Psoas muscle (tissue), 8 donors: ENCODE measurements at regions of chr5 and their contacts with region 1.

Region 1: DNA sequence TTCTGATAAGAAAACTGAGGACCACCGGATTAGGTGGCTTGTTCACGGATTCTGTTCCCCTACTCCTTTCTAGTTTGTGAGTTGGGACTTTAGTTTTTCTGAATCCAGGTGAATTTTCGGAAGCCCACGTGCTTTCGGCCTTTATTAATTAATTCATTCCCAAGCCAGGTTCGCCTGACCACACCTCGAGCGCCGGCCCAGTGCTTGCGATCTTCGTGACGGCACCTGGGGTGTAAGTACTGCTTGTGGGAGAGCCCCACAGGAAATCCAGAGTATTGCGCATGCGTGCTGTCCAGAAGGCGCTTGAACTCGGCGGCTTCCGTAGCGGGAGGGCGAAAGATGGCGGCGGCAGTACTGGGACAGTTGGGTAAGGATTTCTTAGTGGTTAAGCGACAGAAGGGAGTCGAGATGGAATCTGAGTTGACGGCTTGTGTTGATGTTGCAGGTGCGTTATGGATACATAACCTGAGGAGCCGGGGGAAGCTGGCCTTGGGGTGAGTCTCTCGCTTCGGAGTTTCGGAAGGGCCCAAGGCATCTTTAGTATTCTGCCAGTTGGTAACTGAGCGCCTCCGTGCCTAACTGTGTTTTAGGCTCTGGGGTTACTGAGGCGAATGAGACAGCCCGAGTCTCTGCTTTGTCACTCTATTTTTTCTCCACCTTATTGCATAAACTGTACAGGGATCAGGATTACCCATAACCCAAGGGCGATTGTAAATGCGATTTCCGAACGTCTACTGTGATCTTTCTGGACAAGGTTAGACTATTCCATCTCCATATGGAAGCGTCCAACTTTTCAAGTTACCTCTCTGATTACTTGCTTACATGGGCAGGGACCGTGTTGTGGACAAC is at the start of gene MRPL22:
- DNase-seq: peak; percentile 92 to 96
- ATAC-seq: peak; percentile 78 to 87 (median 82)
- H3K4me3 ChIP-seq: peak within 1 kb of the TSS; percentile 79
- H3K27ac ChIP-seq: peak within 1 kb of the TSS; percentile 87
- H3K4me1 ChIP-seq: peaks cover 34% of the 10 kb centered on the region
- H3K27me3 ChIP-seq: no peaks in the 10 kb centered on the region
- CTCF ChIP-seq: peak; percentile 11
- total RNA-seq, gene MRPL22: 28.4 to 53.0 (median 38.1) TPM

Region 2: GRCh38 chr5:154478224-154478565 is 462.8 kb before region 1 on chr5 and contains the start of gene HAND1:
- intact Hi-C with region 1: loop called in 1 of 2 experiments (anchors 10 kb)
- DNase-seq: peak; percentile 40 to 58
- ATAC-seq: peak; percentile 66 to 79 (median 70)
- H3K4me3 ChIP-seq: peak within 1 kb of the TSS; percentile 61
- H3K27ac ChIP-seq: no peak within 1 kb of the TSS
- H3K4me1 ChIP-seq: peaks cover 51% of the 10 kb centered on the region
- H3K27me3 ChIP-seq: peaks cover 0 to 100% (median 77%) of the 10 kb centered on the region in 3 donors
- CTCF ChIP-seq: no peak
- total RNA-seq, gene HAND1: not detected

Region 3: GRCh38 chr5:154754460-154755360 is 186.3 kb before region 1 on chr5:
- intact Hi-C with region 1: loop called in 1 of 2 experiments (anchors 5 kb)
- DNase-seq: peak; percentile 100
- ATAC-seq: peak; percentile 87 to 92 (median 88)
- H3K4me3 ChIP-seq: peak overlapping the region; percentile 99
- H3K27ac ChIP-seq: peak overlapping the region; percentile 99
- H3K4me1 ChIP-seq: peaks cover 35% of the 10 kb centered on the region
- H3K27me3 ChIP-seq: no peaks in the 10 kb centered on the region
- CTCF ChIP-seq: peak; percentile 27

Region 4: GRCh38 chr5:154972476-154973080 is 31.6 kb after region 1 on chr5:
- intact Hi-C with region 1: no loop called
- DNase-seq: no peak
- ATAC-seq: no peak
- H3K4me3 ChIP-seq: no peak overlapping the region
- H3K27ac ChIP-seq: no peak overlapping the region
- H3K4me1 ChIP-seq: no peaks in the 10 kb centered on the region
- H3K27me3 ChIP-seq: no peaks in the 10 kb centered on the region
- CTCF ChIP-seq: peak; percentile 38

Region 5: GRCh38 chr5:155004138-155004744 is 63.2 kb after region 1 on chr5:
- intact Hi-C with region 1: loop called in 1 of 2 experiments (anchors 10 kb)
- DNase-seq: no peak
- ATAC-seq: peak in 2 of 4 donors; percentile 37 to 39
- H3K4me3 ChIP-seq: no peak overlapping the region
- H3K27ac ChIP-seq: no peak overlapping the region
- H3K4me1 ChIP-seq: no peaks in the 10 kb centered on the region
- H3K27me3 ChIP-seq: no peaks in the 10 kb centered on the region
- CTCF ChIP-seq: peak; percentile 39